ENCODE measurements at regions of chr5 and their contacts with region 1.

Region 1: DNA sequence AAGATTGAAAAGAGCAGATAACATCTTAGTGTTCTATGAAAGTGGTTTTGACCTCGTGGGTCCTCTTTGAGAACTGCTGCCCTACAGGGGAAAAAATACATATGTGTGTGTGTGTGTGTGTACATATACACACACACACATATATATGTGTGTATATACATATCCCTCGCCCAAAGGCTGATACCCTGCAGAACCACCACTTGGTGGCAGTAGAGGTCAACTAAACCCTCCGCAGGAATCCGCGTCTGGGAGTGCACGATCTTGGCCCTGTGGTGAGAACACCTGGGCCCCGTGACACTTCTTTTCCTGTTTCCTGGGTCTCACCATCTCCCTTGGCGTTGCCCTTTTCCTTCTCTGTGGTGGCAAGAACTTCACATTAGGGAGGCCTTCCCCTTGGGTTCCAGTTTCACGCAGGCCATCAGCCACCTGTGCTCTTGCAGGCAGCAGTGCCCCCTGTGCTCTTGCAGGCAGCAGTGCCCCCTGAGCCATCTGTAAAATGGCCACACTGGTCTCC is 8.2 kb downstream of the IL9 start:
- DNase-seq: peak; percentile 57
- H3K4me3 Mint-ChIP-seq: no peak overlapping the region
- H3K27ac Mint-ChIP-seq: no peak overlapping the region
- H3K4me1 Mint-ChIP-seq: peaks cover 15% of the 10 kb centered on the region
- H3K27me3 Mint-ChIP-seq: peaks cover 33% of the 10 kb centered on the region

Region 2: DNA sequence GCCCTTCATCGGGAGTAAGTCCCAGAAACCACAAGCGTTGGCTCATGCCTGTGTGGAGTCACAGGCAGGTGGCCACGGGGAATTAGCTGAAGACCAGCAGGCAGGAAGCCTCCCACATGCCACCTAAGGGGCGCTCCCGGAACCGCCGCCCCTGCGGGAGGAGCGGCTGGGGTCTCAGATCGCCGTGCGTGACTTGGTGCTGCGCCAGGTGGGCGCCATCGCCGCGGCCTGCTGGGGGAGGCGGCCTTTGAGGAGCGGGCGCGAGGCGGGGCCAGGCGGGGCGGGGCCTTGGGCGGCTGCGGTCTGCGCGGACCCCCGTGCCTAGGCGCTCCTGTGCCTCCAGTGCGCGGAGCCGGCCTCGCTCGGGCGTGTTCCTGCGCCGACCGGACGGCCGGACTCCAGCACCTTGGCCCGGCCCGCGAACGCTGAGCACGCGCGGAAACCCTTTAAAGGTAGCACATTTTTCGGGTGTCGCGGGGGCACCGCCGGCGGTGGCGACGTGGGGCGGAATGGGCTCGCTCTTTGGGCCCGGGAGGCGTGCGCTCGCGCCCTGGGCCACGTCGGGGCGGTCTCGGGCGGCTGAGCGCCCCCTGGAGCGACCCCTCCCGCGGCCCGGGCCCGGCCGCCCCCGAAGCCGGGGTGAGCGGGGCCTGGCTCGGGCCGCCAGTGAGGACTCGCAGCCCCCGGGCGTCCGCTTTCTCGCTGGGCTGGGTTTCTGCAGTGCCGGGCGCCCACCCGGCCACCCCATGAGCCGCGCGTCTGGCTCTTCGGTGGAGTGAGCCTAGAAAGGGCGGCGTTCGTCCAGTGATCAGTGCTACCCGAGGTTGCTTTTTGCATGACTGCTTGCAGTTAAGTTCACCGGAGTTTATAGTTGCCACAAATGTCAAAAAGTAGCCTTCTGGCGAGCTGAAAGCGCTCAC is 42.9 kb after region 1 on chr5:
- intact Hi-C with region 1: loop called (anchors 5 kb)
- DNase-seq: no peak
- H3K4me3 Mint-ChIP-seq: no peak overlapping the region
- H3K27ac Mint-ChIP-seq: no peak overlapping the region
- H3K4me1 Mint-ChIP-seq: no peaks in the 10 kb centered on the region
- H3K27me3 Mint-ChIP-seq: peaks cover 55% of the 10 kb centered on the region

Region 3: DNA sequence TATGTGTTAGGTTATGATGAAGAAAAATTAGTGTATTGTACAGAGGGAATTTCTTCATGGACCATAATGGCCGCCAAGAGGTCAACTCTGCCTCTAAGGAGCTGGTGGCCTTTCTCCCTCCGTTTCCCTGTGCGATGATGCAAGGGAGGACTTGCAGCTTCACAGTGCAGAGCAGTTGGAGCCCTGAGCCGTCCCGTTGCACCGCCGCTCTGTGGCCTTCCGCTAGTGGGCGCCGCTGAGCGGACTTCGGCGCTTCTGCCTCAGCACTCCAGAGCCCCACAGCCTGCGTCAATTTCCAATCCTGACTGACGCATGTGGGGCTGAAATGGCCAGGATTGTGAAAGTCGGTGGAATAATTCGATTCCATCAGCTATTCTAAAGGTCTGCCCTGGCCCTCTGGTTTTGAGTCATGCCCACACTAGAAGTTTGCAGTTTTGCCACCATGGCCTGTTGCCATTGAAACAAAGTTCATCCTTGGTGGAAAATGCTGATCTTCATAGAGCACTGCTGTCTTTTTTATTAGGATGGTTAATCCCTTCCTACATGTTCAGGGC is 90.0 kb after region 1 on chr5:
- intact Hi-C with region 1: loop called (anchors 1 kb)
- DNase-seq: peak; percentile 47
- H3K4me3 Mint-ChIP-seq: no peak overlapping the region
- H3K27ac Mint-ChIP-seq: no peak overlapping the region
- H3K4me1 Mint-ChIP-seq: no peaks in the 10 kb centered on the region
- H3K27me3 Mint-ChIP-seq: peaks cover 29% of the 10 kb centered on the region

Region 4: GRCh38 chr5:136080483-136081216 is 193.2 kb after region 1 on chr5:
- intact Hi-C with region 1: loop called (anchors 1 kb)
- DNase-seq: peak; percentile 75
- H3K4me3 Mint-ChIP-seq: peak overlapping the region; percentile 77
- H3K27ac Mint-ChIP-seq: peak overlapping the region; percentile 75
- H3K4me1 Mint-ChIP-seq: peaks cover 13% of the 10 kb centered on the region
- H3K27me3 Mint-ChIP-seq: peaks cover 55% of the 10 kb centered on the region

Region 5: GRCh38 chr5:136212252-136212721 is 324.9 kb after region 1 on chr5:
- intact Hi-C with region 1: loop called (anchors 1 kb)
- DNase-seq: peak; percentile 14
- H3K4me3 Mint-ChIP-seq: no peak overlapping the region
- H3K27ac Mint-ChIP-seq: no peak overlapping the region
- H3K4me1 Mint-ChIP-seq: peaks cover 2% of the 10 kb centered on the region
- H3K27me3 Mint-ChIP-seq: peaks cover 6% of the 10 kb centered on the region